ENCODE measurements at regions of chr6 and their contacts with region 1.

Region 1: GRCh38 chr6:28719275-28719940 is 193.7 kb downstream of the GPX5 start:
- DNase-seq: peak in 1 of 2 experiments; percentile 88
- H3K4me3 ChIP-seq: peak overlapping the region in 2 of 4 experiments; percentile 13 to 48; a peak in 2 of 8 replicates
- H3K27ac ChIP-seq: no peak overlapping the region
- H3K4me1 ChIP-seq: no peaks in the 10 kb centered on the region
- H3K27me3 ChIP-seq: no peaks in the 10 kb centered on the region; a peak in 1 of 7 replicates
- CTCF ChIP-seq: no peak
- EP300 ChIP-seq: no peak
- POLR2A ChIP-seq: no peak
- RAD21 ChIP-seq: no peak

Region 2: GRCh38 chr6:28632326-28632851 is 87.0 kb before region 1 on chr6:
- CTCF ChIA-PET with region 1: no interaction called
- POLR2A ChIA-PET with region 1: no interaction called
- DNase-seq: no peak
- H3K4me3 ChIP-seq: no peak overlapping the region
- H3K27ac ChIP-seq: no peak overlapping the region
- H3K4me1 ChIP-seq: peaks cover 0 to 4% (median 0%) of the 10 kb centered on the region in 4 experiments; a peak in 3 of 7 replicates
- H3K27me3 ChIP-seq: peaks cover 2 to 33% (median 19%) of the 10 kb centered on the region in 4 experiments
- CTCF ChIP-seq: no peak
- EP300 ChIP-seq: no peak
- POLR2A ChIP-seq: no peak
- RAD21 ChIP-seq: no peak

Region 3: DNA sequence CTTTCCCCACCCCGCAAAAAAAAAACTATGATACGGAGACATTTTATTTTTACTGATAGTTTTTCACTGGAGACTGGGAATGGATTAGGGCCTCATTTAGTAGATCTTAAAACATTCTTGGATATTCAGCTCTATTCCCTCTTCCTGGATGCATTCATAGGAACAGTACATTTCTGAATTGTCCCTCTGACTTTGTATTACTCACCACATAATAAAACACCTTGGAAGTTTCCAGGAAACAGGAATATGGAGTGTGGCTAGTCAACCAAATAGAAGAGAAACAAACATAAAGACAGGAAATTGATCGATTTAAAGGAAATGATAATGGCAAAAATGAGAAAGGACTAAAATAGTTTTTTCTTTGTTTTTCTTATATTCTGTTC is 46.0 kb before region 1 on chr6:
- CTCF ChIA-PET with region 1: no interaction called
- POLR2A ChIA-PET with region 1: no interaction called
- DNase-seq: no peak
- H3K4me3 ChIP-seq: peak overlapping the region in 1 of 4 experiments; percentile 80; a peak in 3 of 8 replicates
- H3K27ac ChIP-seq: no peak overlapping the region
- H3K4me1 ChIP-seq: no peaks in the 10 kb centered on the region; a peak in 2 of 7 replicates
- H3K27me3 ChIP-seq: peaks cover 0 to 14% (median 9%) of the 10 kb centered on the region in 4 experiments; a peak in 6 of 7 replicates
- CTCF ChIP-seq: no peak
- EP300 ChIP-seq: no peak
- POLR2A ChIP-seq: no peak
- RAD21 ChIP-seq: no peak

Region 4: GRCh38 chr6:28729501-28730402 is 10.3 kb after region 1 on chr6:
- CTCF ChIA-PET with region 1: interaction called, 3 read pairs
- POLR2A ChIA-PET with region 1: interaction called, 10 read pairs
- DNase-seq: no peak
- H3K4me3 ChIP-seq: peak overlapping the region; percentile 78 to 98 (median 90)
- H3K27ac ChIP-seq: no peak overlapping the region
- H3K4me1 ChIP-seq: no peaks in the 10 kb centered on the region; a peak in 1 of 7 replicates
- H3K27me3 ChIP-seq: peaks cover 0 to 7% (median 4%) of the 10 kb centered on the region in 4 experiments; a peak in 5 of 7 replicates
- CTCF ChIP-seq: no peak
- EP300 ChIP-seq: no peak
- POLR2A ChIP-seq: no peak
- RAD21 ChIP-seq: no peak

Region 5: GRCh38 chr6:28758046-28758817 is 38.8 kb after region 1 on chr6:
- CTCF ChIA-PET with region 1: no interaction called
- POLR2A ChIA-PET with region 1: interaction called, 10 read pairs
- DNase-seq: peak; percentile 77 to 93
- H3K4me3 ChIP-seq: peak overlapping the region; percentile 77 to 90 (median 84)
- H3K27ac ChIP-seq: no peak overlapping the region
- H3K4me1 ChIP-seq: no peaks in the 10 kb centered on the region
- H3K27me3 ChIP-seq: peaks cover 1 to 11% (median 8%) of the 10 kb centered on the region in 4 experiments
- CTCF ChIP-seq: no peak
- EP300 ChIP-seq: no peak
- POLR2A ChIP-seq: peak in 1 of 2 experiments; percentile 37; a peak in 1 of 3 replicates
- RAD21 ChIP-seq: no peak; a peak in 1 of 4 replicates

Region 6: GRCh38 chr6:28824793-28825731 is 105.7 kb after region 1 on chr6:
- CTCF ChIA-PET with region 1: no interaction called
- POLR2A ChIA-PET with region 1: no interaction called
- DNase-seq: no peak
- H3K4me3 ChIP-seq: peak overlapping the region; percentile 51 to 62 (median 58); a peak in 7 of 8 replicates
- H3K27ac ChIP-seq: no peak overlapping the region
- H3K4me1 ChIP-seq: peaks cover 0 to 3% (median 0%) of the 10 kb centered on the region in 4 experiments; a peak in 4 of 7 replicates
- H3K27me3 ChIP-seq: peaks cover 29 to 64% (median 46%) of the 10 kb centered on the region in 4 experiments
- CTCF ChIP-seq: no peak
- EP300 ChIP-seq: no peak
- POLR2A ChIP-seq: no peak
- RAD21 ChIP-seq: no peak